RWPE1 (cell line): ENCODE measurements at regions of chr12 and their contacts with region 1.

Region 1: GRCh38 chr12:3275171-3276041 is 198.2 kb downstream of the TSPAN9 start:
- DNase-seq: peak; percentile 74
- H3K27ac ChIP-seq: no peak overlapping the region
- CTCF ChIP-seq: peak; percentile 80

Region 2: GRCh38 chr12:3073438-3074250 is 201.8 kb before region 1 on chr12:
- CTCF ChIA-PET with region 1: interaction called, 21 read pairs
- POLR2A ChIA-PET with region 1: no interaction called
- DNase-seq: peak; percentile 82
- H3K27ac ChIP-seq: no peak overlapping the region
- CTCF ChIP-seq: peak; percentile 83

Region 3: GRCh38 chr12:3135522-3136461 is 139.6 kb before region 1 on chr12:
- CTCF ChIA-PET with region 1: interaction called, 99 read pairs
- POLR2A ChIA-PET with region 1: no interaction called
- DNase-seq: peak; percentile 78
- H3K27ac ChIP-seq: no peak overlapping the region
- CTCF ChIP-seq: peak; percentile 55

Region 4: DNA sequence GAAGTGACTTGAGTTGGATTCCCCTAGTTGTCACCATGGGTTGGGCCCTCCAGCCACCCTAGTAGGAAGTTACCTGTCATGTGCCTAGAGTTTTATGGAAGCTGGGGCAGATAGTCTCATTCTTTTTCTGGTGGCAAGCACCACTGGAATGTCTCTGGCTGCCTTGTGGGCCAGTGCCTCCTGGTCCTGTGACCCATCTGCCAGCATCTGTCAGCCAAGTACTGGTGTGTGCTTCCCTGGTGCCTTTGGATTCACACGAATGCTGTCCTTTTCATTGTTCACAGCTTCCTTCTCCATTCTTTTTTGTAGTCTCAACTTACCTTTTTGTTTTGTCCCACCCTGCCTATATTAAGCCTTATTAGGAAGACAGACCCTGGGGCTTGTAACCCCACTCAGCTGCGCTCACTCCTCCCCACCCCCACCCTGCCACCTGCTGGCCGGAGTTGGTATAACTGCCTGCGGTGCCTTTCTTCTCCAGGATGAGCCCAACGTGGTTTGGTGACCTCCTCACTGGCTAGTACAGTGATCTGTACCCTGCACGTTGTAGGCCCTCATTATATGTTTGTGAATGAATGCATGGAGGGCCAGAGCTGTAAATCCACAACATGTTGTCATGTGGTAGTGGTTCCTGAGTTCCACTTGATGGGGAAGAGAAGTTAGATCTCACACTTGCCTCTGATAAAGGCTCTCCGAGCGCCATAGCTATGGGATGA is 72.5 kb before region 1 on chr12:
- CTCF ChIA-PET with region 1: interaction called, 12 read pairs
- POLR2A ChIA-PET with region 1: no interaction called
- DNase-seq: peak; percentile 70
- H3K27ac ChIP-seq: no peak overlapping the region
- CTCF ChIP-seq: peak; percentile 76

Region 5: DNA sequence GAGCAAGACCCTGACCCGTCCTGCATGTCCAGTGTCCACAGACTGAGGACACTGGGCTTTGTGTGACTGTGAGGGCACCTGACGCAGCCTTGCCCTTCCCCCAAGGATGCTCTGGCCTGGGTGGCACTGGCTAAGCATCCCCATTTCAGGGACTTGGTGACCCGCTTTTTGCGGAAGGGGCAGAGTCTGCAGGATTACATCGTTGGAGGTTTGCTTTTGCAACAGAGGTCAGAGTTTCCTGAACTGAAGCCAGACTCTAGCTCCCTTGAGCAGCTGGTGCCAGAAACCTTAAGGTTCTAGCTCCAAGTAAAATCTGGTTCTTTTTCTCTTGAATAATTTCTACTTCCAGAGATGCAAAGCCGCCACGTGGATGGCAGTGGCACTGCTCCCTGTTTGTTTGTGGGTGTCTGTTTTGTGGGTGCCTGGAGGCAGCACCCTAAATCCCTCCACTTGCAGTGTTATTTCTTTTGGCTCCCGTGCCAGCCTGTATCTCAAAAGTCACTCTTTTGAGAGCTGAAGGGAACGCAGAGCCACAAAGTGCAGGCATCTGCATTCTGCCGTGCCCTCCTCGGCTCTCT is 13.5 kb before region 1 on chr12:
- CTCF ChIA-PET with region 1: interaction called, 11 read pairs
- POLR2A ChIA-PET with region 1: no interaction called
- DNase-seq: no peak
- H3K27ac ChIP-seq: no peak overlapping the region
- CTCF ChIP-seq: no peak